HEK293T (cell line): ENCODE measurements at regions of chr3 and their contacts with region 1.

Region 1: DNA sequence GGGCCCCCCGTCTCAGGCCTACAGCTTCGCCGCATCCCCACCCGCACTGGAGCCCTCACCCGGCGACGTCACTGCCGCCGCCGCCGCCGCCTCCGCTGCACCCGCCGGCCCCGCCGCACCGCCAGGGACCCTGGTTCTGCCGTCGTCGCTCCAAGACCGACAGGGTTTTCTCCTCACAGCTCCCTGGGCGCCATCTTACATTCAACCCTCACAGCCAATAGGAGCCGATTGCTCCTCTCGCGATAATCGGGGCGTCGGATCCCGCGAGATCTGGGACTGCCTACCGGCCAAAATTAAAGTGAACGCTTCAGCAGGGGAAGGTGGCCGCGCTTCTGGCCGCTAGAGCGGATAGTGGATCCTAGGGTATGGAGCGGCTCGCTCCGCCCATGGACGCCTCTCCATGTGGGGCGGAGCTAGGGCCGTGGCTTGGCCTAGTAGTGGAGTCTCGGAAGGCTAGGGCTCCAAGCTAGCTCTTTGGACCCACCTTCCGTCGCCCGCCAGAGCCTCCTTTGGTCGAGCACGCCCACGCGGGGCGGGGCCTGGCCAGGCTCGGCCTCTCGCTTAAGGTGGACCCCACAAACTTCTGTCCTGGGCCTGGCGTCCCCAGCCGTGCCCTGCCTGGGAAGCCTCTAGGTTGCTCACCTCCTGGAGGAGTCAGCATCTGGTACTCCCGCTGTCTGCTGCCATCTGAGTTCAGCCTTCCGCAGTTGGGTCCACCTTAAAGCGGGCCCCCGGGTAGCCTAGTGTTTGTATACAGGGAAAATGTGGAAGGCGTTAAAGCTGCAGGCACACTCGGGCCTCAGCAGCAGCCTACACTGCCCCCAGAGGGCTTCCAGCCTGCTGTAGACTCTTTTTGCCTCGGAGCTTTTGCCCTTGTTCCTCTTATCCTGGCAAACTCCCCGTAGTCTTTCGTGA is at the start of gene QRICH1:
- DNase-seq: peak; percentile 94

Region 2: GRCh38 chr3:48784426-48785120 is 309.5 kb before region 1 on chr3:
- CTCF ChIA-PET with region 1: no interaction called
- POLR2A ChIA-PET with region 1: no interaction called
- DNase-seq: no peak

Region 3: DNA sequence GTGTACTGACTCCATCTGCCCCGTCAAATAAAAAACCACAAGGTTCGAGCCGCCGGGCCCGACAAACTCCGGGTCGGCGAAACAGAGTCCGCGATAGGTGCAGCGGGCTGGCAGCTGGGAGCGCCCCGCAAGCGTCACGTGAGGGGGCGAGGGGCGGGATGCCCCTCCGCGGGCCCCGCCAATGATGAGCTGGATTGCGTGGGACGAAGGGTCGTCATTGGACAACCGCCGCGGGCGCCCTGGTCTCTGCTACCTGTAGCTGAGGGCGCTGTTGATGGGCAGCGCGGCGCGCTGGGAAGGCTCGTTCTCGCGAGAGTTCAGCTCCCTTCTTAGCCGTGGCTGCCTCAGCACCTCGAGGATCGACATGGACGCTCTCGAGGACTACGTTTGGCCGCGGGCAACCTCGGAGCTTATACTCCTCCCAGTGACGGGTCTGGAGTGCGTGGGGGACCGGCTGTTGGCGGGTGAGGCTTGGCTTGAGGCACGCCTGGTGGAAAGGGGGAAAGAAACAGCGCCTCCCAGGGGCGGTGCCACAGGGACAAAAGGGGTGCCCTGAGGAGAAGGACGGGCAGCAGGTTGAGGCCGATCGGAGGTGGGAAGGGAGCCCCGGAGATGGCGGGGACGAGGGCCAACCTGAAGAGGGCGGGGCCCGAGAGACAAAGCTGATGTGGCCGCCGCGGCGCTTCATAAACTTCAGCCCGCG is 86.9 kb before region 1 on chr3 and contains the start of gene WDR6:
- CTCF ChIA-PET with region 1: interaction called, 6 read pairs
- POLR2A ChIA-PET with region 1: interaction called, 20 read pairs
- DNase-seq: peak; percentile 97

Region 4: GRCh38 chr3:49028673-49029562 is 65.2 kb before region 1 on chr3 and contains the start of gene IMPDH2:
- CTCF ChIA-PET with region 1: no interaction called
- POLR2A ChIA-PET with region 1: interaction called, 49 read pairs
- DNase-seq: peak; percentile 95

Region 5: GRCh38 chr3:49120438-49121131 is 26.5 kb after region 1 on chr3 and contains the start of gene USP19:
- CTCF ChIA-PET with region 1: no interaction called
- POLR2A ChIA-PET with region 1: interaction called, 28 read pairs
- DNase-seq: peak; percentile 96

Region 6: DNA sequence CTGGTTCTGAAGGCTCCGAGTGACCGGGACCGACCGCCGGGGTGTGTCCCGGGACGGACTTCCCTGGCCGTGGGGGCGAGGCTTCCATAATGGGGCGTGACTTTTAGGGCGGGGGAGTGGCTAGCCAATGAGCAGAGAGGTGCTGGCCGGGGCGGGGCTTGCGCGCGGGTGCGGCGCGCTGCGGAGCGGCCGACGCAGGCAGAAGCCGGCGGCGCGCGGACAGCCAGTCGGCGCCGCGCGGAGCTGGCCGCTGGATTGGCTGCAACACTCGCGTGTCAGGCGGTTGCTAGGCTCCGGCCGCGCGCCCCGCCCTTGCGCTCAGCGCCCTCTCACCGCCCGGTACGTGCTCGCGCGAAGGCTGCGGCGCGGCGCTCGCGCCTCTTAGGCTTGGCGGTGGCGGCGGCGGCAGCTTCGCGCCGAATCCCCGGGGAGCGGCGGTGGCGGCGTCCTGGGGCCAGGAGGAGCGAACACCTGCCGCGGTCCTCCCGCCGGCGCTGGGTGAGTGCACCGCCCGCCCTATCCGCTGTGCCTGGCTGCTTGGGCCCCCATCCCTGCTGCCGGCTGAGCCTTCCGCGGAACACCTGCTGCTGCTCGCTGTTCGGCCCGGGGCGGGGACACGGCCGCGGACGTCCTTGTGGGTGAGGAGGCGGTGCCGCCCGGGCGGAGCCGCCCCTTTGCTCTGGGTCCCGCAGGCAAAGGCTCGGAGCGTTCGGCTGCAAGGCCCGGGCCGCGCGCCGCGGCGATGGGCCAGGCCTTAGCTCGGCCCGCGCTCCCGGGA is 376.0 kb after region 1 on chr3 and contains the start of gene DAG1:
- CTCF ChIA-PET with region 1: no interaction called
- POLR2A ChIA-PET with region 1: interaction called, 14 read pairs
- DNase-seq: peak; percentile 98